ENCODE measurements at regions of chr3 and their contacts with region 1.

Region 1: DNA sequence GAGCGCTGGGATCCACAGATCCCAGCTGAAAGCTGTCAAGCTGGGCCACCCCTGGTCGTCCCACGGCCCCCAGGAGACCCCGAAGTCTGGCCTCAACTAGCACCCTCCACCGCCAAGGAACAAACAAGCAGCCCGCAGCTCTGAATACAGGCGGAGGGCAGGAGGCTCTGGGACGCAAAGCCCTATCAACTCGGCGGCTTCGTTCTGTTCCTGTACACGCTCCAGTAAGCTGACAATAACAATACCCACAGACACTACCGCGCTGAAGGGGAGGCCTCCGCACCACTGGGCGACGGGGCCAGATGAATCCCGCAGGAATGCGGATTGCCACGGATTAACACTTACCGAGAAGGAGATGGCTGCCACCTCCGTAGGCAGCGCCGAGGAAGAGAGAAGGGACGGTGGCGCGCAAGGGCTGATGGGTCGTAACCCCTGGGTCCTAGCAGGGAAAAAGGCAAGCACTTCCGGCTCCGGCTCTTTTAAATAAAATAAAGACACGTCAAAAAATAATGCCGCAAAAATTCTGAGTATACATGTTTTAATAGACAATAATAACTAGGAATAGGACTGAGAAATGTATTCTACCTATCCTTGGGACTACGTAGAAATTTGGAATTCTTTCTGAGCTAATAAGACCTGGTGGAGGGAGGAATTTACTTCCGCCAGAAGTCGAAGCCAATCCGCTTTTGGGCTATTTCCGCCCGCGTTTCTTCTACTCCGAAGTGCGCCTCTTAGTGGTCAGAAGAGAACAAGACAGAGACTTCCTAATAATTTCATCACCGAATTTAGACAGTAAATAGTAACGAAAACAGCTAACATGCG is at the start of gene RPL32:
- DNase-seq: peak; percentile 72 to 94 (median 92)
- ATAC-seq: peak; percentile 95
- H3K4me3 ChIP-seq: peak within 1 kb of the TSS; percentile 90
- H3K4me3 Mint-ChIP-seq: peak within 1 kb of the TSS; percentile 92 to 97 (median 96)
- H3K27ac ChIP-seq: peak within 1 kb of the TSS; percentile 92
- H3K27ac Mint-ChIP-seq: peak within 1 kb of the TSS; percentile 98 to 100 (median 100)
- H3K4me1 ChIP-seq: peaks cover 16 to 28% of the 10 kb centered on the region in 2 donors
- H3K4me1 Mint-ChIP-seq: peaks cover 31 to 54% (median 47%) of the 10 kb centered on the region in 7 donors
- H3K27me3 ChIP-seq: no peaks in the 10 kb centered on the region
- H3K27me3 Mint-ChIP-seq: no peaks in the 10 kb centered on the region
- total RNA-seq, gene RPL32: 1,890 to 4,471 (median 4,246) TPM

Region 2: GRCh38 chr3:12484198-12484974 is 357.0 kb before region 1 on chr3 and contains the start of gene TSEN2:
- CTCF ChIA-PET with region 1: no interaction called
- POLR2A ChIA-PET with region 1: interaction called, 4 read pairs
- intact Hi-C with region 1: loop called (anchors 1 kb)
- DNase-seq: peak; percentile 95 to 100 (median 98)
- ATAC-seq: peak; percentile 96
- H3K4me3 ChIP-seq: peak within 1 kb of the TSS; percentile 76
- H3K4me3 Mint-ChIP-seq: peak within 1 kb of the TSS; percentile 87 to 99 (median 97)
- H3K27ac ChIP-seq: peak within 1 kb of the TSS; percentile 92
- H3K27ac Mint-ChIP-seq: peak within 1 kb of the TSS; percentile 96 to 99 (median 98)
- H3K4me1 ChIP-seq: peaks cover 17% of the 10 kb centered on the region in 2 donors
- H3K4me1 Mint-ChIP-seq: peaks cover 21 to 65% (median 44%) of the 10 kb centered on the region in 7 donors
- H3K27me3 ChIP-seq: no peaks in the 10 kb centered on the region
- H3K27me3 Mint-ChIP-seq: peaks cover 0 to 2% (median 0%) of the 10 kb centered on the region in 5 donors
- total RNA-seq, gene TSEN2: 12.1 to 27.5 (median 13.6) TPM

Region 3: GRCh38 chr3:12648384-12648959 is 192.9 kb before region 1 on chr3:
- CTCF ChIA-PET with region 1: no interaction called
- POLR2A ChIA-PET with region 1: no interaction called
- intact Hi-C with region 1: no loop called
- DNase-seq: no peak
- ATAC-seq: peak; percentile 24
- H3K4me3 ChIP-seq: no peak overlapping the region
- H3K4me3 Mint-ChIP-seq: peak overlapping the region in 7 of 10 donors; percentile 5 to 51 (median 21)
- H3K27ac ChIP-seq: no peak overlapping the region
- H3K27ac Mint-ChIP-seq: peak overlapping the region in 2 of 9 donors; percentile 31 to 54
- H3K4me1 ChIP-seq: peaks cover 5 to 17% of the 10 kb centered on the region in 2 donors
- H3K4me1 Mint-ChIP-seq: peaks cover 26 to 81% (median 61%) of the 10 kb centered on the region in 7 donors
- H3K27me3 ChIP-seq: no peaks in the 10 kb centered on the region
- H3K27me3 Mint-ChIP-seq: no peaks in the 10 kb centered on the region

Region 4: GRCh38 chr3:12719984-12720898 is 121.1 kb before region 1 on chr3:
- CTCF ChIA-PET with region 1: no interaction called
- POLR2A ChIA-PET with region 1: no interaction called
- intact Hi-C with region 1: loop called (anchors 1 kb)
- DNase-seq: peak; percentile 37 to 85 (median 81)
- ATAC-seq: peak; percentile 98
- H3K4me3 ChIP-seq: peak overlapping the region; percentile 50
- H3K4me3 Mint-ChIP-seq: peak overlapping the region; percentile 30 to 79 (median 72)
- H3K27ac ChIP-seq: no peak overlapping the region
- H3K27ac Mint-ChIP-seq: peak overlapping the region; percentile 46 to 93 (median 74)
- H3K4me1 ChIP-seq: peaks cover 0 to 5% of the 10 kb centered on the region in 2 donors
- H3K4me1 Mint-ChIP-seq: peaks cover 6 to 12% (median 9%) of the 10 kb centered on the region in 7 donors
- H3K27me3 ChIP-seq: no peaks in the 10 kb centered on the region
- H3K27me3 Mint-ChIP-seq: no peaks in the 10 kb centered on the region

Region 5: GRCh38 chr3:12810013-12810780 is 31.2 kb before region 1 on chr3:
- CTCF ChIA-PET with region 1: interaction called, 16 read pairs
- POLR2A ChIA-PET with region 1: interaction called, 30 read pairs
- intact Hi-C with region 1: loop called (anchors 1 kb)
- DNase-seq: peak; percentile 89 to 98 (median 94)
- ATAC-seq: peak; percentile 99
- H3K4me3 ChIP-seq: peak overlapping the region; percentile 79
- H3K4me3 Mint-ChIP-seq: peak overlapping the region; percentile 63 to 82 (median 77)
- H3K27ac ChIP-seq: peak overlapping the region; percentile 68
- H3K27ac Mint-ChIP-seq: peak overlapping the region; percentile 23 to 85 (median 64)
- H3K4me1 ChIP-seq: peaks cover 3 to 7% of the 10 kb centered on the region in 2 donors
- H3K4me1 Mint-ChIP-seq: peaks cover 4 to 16% (median 12%) of the 10 kb centered on the region in 7 donors
- H3K27me3 ChIP-seq: no peaks in the 10 kb centered on the region
- H3K27me3 Mint-ChIP-seq: peaks cover 0 to 11% (median 0%) of the 10 kb centered on the region in 5 donors

Region 6: DNA sequence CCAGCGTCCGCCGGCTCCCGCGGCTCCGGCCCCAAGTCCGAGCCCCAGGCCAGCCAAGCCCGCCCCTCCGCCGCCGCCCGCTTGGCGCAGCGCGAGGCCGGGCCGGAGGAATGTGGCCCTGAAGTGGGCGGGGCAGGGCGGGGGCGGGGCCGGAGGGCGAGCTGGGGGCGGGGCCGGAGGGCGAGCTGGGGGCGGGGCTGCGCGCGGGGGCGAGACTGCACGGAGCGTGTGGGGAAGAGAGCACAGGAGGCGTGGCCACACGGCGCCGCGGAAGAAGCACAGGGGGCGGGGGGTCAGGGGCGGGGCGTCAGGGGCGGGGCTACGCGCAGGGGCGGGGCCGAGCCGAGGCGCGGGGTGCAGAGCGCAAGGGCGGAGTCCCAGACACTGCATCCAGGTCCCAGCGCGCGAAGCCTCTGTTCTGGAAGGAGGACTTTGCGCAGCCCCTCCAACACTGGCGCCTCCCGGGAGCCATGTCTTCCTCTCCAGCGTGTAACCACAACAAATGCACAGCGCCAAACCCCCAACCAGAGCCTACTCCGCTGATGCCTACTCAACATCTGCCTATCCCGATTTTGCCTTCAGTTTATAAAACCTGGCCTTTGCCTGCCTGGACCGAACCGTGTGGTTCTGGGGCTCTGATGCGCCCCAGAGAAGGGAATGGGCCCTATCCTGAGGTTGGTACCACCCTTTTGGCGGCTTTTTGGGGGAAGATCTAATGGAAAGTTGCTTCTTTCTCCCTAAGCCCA is 126.4 kb after region 1 on chr3:
- CTCF ChIA-PET with region 1: interaction called, 3 read pairs
- POLR2A ChIA-PET with region 1: no interaction called
- intact Hi-C with region 1: loop called (anchors 1 kb)
- DNase-seq: peak; percentile 71 to 87 (median 83)
- ATAC-seq: peak; percentile 99
- H3K4me3 ChIP-seq: peak overlapping the region; percentile 47
- H3K4me3 Mint-ChIP-seq: peak overlapping the region; percentile 74 to 87 (median 86)
- H3K27ac ChIP-seq: peak overlapping the region; percentile 29
- H3K27ac Mint-ChIP-seq: peak overlapping the region in 4 of 9 donors; percentile 9 to 84 (median 60)
- H3K4me1 ChIP-seq: peaks cover 47 to 53% of the 10 kb centered on the region in 2 donors
- H3K4me1 Mint-ChIP-seq: peaks cover 50 to 86% (median 77%) of the 10 kb centered on the region in 7 donors
- H3K27me3 ChIP-seq: no peaks in the 10 kb centered on the region
- H3K27me3 Mint-ChIP-seq: peaks cover 0 to 5% (median 0%) of the 10 kb centered on the region in 5 donors

Region 7: DNA sequence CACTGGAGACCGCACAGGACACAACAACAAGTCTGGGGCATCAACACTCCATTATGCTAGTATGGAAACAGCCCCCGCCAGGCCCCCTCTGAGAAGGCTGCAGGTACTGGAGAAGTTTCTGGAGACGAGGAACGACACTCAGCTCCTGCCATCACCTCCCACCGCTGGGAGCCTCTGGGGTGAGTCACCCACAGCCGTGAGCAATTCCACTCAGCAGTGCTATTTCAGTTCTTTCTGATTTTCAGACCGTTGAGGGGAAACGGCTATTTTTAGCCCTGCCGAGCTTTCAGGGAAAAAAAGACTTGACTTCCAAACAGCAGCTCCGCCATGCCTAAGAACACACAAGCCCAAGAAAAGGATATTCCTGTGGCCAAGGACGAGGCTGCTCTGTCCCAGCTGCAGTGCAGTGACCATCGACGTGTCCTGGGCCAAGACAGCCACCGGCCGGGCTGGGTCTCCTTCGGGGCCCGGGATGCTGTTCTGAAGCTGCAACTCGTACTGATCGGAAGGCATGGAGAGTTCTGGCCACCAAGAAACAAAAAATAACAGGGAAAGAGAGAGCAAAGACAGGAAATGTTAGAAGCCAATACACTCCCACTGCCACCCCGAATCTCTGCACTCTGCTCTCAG is 538.0 kb after region 1 on chr3:
- CTCF ChIA-PET with region 1: no interaction called
- POLR2A ChIA-PET with region 1: no interaction called
- intact Hi-C with region 1: no loop called
- DNase-seq: no peak
- ATAC-seq: no peak
- H3K4me3 ChIP-seq: no peak overlapping the region
- H3K4me3 Mint-ChIP-seq: no peak overlapping the region
- H3K27ac ChIP-seq: no peak overlapping the region
- H3K27ac Mint-ChIP-seq: peak overlapping the region in 1 of 9 donors; percentile 78
- H3K4me1 ChIP-seq: no peaks in the 10 kb centered on the region
- H3K4me1 Mint-ChIP-seq: peaks cover 0 to 11% (median 8%) of the 10 kb centered on the region in 7 donors
- H3K27me3 ChIP-seq: no peaks in the 10 kb centered on the region
- H3K27me3 Mint-ChIP-seq: no peaks in the 10 kb centered on the region

Region 8: GRCh38 chr3:13479581-13480339 is 638.4 kb after region 1 on chr3 and contains the start of gene HDAC11:
- CTCF ChIA-PET with region 1: no interaction called
- POLR2A ChIA-PET with region 1: interaction called, 7 read pairs
- intact Hi-C with region 1: loop called in 1 of 2 experiments (anchors 1 kb)
- DNase-seq: peak; percentile 93 to 98 (median 95)
- ATAC-seq: peak; percentile 98
- H3K4me3 ChIP-seq: peak within 1 kb of the TSS; percentile 97
- H3K4me3 Mint-ChIP-seq: peak within 1 kb of the TSS; percentile 90 to 97 (median 94)
- H3K27ac ChIP-seq: peak within 1 kb of the TSS; percentile 98
- H3K27ac Mint-ChIP-seq: peak within 1 kb of the TSS; percentile 82 to 97 (median 94)
- H3K4me1 ChIP-seq: peaks cover 8 to 15% of the 10 kb centered on the region in 2 donors
- H3K4me1 Mint-ChIP-seq: peaks cover 4 to 22% (median 15%) of the 10 kb centered on the region in 7 donors
- H3K27me3 ChIP-seq: no peaks in the 10 kb centered on the region
- H3K27me3 Mint-ChIP-seq: peaks cover 0 to 13% (median 0%) of the 10 kb centered on the region in 5 donors
- total RNA-seq, gene HDAC11: 1.2 to 8.0 (median 7.3) TPM

Region 9: GRCh38 chr3:14651440-14652251 is 1810.3 kb after region 1 on chr3 and contains the start of gene CCDC174:
- CTCF ChIA-PET with region 1: no interaction called
- POLR2A ChIA-PET with region 1: interaction called, 10 read pairs
- intact Hi-C with region 1: no loop called
- DNase-seq: peak; percentile 84 to 98 (median 96)
- ATAC-seq: peak; percentile 99
- H3K4me3 ChIP-seq: peak within 1 kb of the TSS; percentile 90
- H3K4me3 Mint-ChIP-seq: peak within 1 kb of the TSS; percentile 84 to 100 (median 96)
- H3K27ac ChIP-seq: peak within 1 kb of the TSS; percentile 94
- H3K27ac Mint-ChIP-seq: peak within 1 kb of the TSS; percentile 92 to 100 (median 98)
- H3K4me1 ChIP-seq: peaks cover 21 to 25% of the 10 kb centered on the region in 2 donors
- H3K4me1 Mint-ChIP-seq: peaks cover 25 to 80% (median 66%) of the 10 kb centered on the region in 7 donors
- H3K27me3 ChIP-seq: no peaks in the 10 kb centered on the region
- H3K27me3 Mint-ChIP-seq: peaks cover 0 to 2% (median 0%) of the 10 kb centered on the region in 5 donors
- total RNA-seq, gene CCDC174: 21.6 to 59.2 (median 46.2) TPM